Body of pancreas (tissue), 4 donors: ENCODE measurements at regions of chr10 and their contacts with region 1.

Region 1: DNA sequence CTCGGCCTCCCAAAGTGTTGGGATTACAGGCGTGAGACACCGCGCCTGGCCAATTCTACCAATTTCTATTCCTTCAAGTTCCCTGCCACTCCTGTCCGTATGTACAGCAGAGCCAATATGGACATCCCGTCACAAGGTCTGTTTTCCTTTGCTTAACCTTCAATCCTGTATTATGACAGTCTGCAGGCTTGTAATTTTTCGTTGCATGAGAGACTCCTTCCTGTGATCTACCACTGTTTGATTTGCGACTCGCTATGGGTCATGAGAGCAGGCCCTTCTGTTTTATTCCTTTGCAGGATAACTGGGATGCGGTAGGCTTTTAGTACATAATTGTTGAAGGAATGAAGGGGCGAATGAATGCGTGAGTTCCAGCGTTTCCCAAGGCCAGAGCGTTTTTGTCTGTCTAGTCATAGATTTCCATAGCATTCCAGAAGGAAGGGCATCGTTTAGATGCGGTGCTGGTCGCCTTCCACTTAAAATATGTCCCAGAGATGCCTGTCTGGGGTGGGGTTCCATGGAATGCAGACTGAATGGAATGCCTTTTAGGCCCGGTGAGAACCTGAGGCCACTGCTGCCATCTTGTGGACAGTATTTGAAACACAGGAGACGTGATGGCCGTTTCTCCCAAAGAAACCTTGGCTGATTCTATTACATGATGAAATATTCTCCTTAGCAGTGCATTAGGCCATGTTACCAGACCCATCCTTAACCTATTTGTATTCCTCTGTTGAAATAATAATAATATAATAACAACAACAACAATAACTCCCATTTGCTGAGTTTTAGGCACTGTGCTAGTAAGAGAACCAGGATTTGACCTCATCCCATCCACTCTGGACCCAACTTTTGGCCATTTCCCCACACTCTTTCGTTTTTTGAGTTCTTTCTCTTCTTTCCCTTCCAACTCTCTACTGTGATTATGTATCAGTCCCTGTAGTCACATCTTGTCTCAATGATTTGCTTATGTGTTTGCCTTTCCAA is 193.2 kb downstream of the MYOF start:
- DNase-seq: peak; percentile 73 to 79 (median 75)
- ATAC-seq: peak; percentile 87
- H3K4me3 ChIP-seq: no peak overlapping the region
- H3K27ac ChIP-seq: no peak overlapping the region
- H3K4me1 ChIP-seq: no peaks in the 10 kb centered on the region
- H3K27me3 ChIP-seq: no peaks in the 10 kb centered on the region
- CTCF ChIP-seq: peak; percentile 61 to 86 (median 78)
- POLR2A ChIP-seq: no peak

Region 2: DNA sequence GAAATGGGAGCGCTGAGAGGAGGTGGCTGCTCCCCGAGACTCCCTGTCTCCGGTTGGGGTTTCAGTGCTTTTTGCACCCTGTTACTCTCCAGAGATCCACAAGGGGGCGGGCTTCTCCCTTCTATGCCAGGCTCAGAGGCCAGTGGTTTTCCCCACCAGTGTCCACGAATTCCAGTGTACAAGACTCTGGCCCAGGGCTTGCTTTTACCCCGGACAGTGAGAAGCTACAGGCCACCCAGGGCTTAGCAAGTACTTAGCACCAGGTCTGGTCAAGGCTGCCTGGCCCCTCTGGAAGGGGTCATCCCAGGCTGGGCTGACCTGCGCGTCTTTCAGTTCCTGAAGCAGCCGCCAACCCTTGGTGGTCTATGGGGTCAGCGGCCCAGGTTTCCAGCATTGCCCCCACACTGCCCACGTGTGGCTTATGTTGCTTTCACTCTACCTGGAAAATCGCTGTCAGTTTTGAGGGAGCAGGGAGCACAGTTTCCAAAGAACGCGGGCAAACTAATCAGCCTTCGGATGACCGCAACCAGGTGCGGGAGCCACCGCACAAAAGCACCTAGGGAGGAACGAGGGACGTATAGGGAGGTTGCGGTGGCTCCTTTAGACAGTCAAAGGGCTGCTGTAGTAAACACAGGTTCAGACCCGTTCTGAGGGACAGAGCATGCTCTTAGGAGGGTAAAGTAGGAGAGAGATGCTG is 208.4 kb before region 1 on chr10:
- intact Hi-C with region 1: loop called (anchors 10 kb)
- DNase-seq: peak; percentile 40 to 58 (median 51)
- ATAC-seq: peak; percentile 60
- H3K4me3 ChIP-seq: no peak overlapping the region
- H3K27ac ChIP-seq: no peak overlapping the region
- H3K4me1 ChIP-seq: no peaks in the 10 kb centered on the region
- H3K27me3 ChIP-seq: no peaks in the 10 kb centered on the region
- CTCF ChIP-seq: peak; percentile 59 to 78 (median 66)
- POLR2A ChIP-seq: no peak